ENCODE measurements at regions of chr7 and their contacts with region 1.

Region 1: DNA sequence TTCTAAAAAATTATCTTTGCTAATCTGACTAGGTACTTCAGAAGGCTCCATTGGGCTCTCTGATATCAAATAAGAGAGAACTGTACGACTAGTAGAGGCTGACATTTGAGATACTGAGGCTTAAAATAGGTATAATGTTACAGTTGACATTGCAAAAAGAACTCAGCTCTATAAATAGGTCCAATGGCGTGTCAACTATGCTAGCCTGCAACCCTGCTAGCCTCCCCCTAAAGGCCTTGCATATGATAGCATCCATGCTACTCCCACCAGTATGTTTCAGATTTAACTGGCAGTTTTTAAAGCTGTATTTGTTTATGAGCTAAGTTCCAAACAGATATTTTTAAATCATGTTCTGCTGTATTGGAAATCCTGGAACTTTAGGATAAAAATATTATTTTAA is at the start of gene PPP1R3A:
- DNase-seq: peak in 2 of 5 donors; percentile 40 to 44
- ATAC-seq: peak; percentile 96 to 97 (median 96)
- H3K4me3 ChIP-seq: peak within 1 kb of the TSS; percentile 3 to 62 (median 50)
- H3K27ac ChIP-seq: peak within 1 kb of the TSS; percentile 52 to 89 (median 74)
- H3K4me1 ChIP-seq: peaks cover 0 to 5% (median 0%) of the 10 kb centered on the region in 12 donors
- H3K27me3 ChIP-seq: no peaks in the 10 kb centered on the region
- CTCF ChIP-seq: peak in 10 of 12 donors; percentile 10 to 51 (median 34)
- POLR2A ChIP-seq: no peak
- total RNA-seq, gene PPP1R3A: 53.4 to 156 (median 117) TPM

Region 2: GRCh38 chr7:113774182-113774807 is 144.7 kb before region 1 on chr7:
- intact Hi-C with region 1: loop called in 1 of 10 experiments (anchors 5 kb)
- DNase-seq: peak in 2 of 5 donors; percentile 18 to 27
- ATAC-seq: peak; percentile 64 to 82 (median 73)
- H3K4me3 ChIP-seq: no peak overlapping the region
- H3K27ac ChIP-seq: peak overlapping the region in 2 of 12 donors; percentile 17 to 28
- H3K4me1 ChIP-seq: peaks cover 0 to 6% (median 0%) of the 10 kb centered on the region in 12 donors
- H3K27me3 ChIP-seq: no peaks in the 10 kb centered on the region
- CTCF ChIP-seq: peak; percentile 29 to 66 (median 54)
- POLR2A ChIP-seq: no peak

Region 3: DNA sequence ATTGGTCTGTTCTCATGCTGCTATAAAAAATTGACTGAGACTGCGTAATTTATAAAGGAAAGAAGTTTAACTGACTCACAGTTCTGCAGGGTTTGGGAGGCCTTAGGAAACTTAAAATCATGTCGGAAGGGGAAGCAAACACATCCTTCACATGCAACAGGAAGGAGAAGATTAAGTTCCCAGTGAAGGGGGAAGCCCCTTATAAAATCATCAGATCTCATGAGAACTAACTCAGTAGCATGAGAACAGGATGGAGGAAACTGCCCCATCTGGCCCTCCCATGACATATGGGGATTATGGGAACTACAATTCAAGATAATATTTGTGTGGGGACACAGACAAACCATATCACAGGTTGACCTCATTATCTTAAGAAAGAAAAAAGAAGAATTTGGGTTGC is 134.6 kb before region 1 on chr7:
- intact Hi-C with region 1: loop called in 2 of 10 experiments (anchors 5 to 10 kb)
- DNase-seq: no peak
- ATAC-seq: no peak
- H3K4me3 ChIP-seq: no peak overlapping the region
- H3K27ac ChIP-seq: no peak overlapping the region
- H3K4me1 ChIP-seq: peaks cover 0 to under 1% (median 0%) of the 10 kb centered on the region in 12 donors
- H3K27me3 ChIP-seq: no peaks in the 10 kb centered on the region
- CTCF ChIP-seq: no peak
- POLR2A ChIP-seq: no peak

Region 4: DNA sequence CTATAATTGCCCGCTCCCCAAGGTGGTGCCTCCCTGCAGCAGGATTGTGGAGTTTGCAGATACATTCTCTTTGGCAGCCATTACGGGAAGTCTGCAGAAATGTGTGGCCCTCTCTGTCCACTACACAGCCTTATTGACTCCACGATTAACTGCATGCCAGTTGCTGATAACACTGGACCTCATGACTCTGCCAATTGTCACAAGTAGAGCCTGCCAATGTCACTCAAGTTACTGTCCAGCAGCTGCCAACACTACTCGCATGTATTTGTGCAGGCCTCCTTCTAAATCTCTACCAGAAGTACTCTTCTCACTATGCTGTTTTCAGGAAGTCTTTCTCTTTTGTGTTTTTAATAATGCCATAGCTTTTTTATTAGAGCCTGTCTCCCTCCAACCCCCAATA is 128.9 kb before region 1 on chr7:
- intact Hi-C with region 1: loop called in 6 of 10 experiments (anchors 5 to 10 kb)
- DNase-seq: peak; percentile 42 to 71 (median 52)
- ATAC-seq: peak; percentile 98 to 99 (median 99)
- H3K4me3 ChIP-seq: no peak overlapping the region
- H3K27ac ChIP-seq: peak overlapping the region in 4 of 12 donors; percentile 14 to 62 (median 40)
- H3K4me1 ChIP-seq: peaks cover 0 to 17% (median 0%) of the 10 kb centered on the region in 12 donors
- H3K27me3 ChIP-seq: no peaks in the 10 kb centered on the region
- CTCF ChIP-seq: no peak
- POLR2A ChIP-seq: no peak

Region 5: DNA sequence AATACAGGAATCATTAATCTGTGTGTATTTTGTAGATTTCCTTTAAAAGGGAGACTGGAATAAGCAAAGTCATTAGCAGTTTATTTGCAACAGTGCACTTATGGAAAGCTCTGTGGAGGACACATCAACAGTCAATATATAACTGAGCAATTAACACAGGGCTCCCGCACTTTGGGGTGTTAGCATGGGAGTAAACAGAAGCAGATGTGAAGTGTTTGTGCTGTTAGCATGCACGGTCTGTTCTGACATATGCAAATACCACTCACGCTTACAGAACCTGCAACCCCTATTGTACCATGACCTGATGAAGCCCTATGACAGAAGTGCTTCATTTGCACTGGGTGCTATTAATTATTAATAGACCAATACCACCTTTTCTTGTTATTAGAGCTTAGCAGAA is 119.0 kb before region 1 on chr7:
- intact Hi-C with region 1: loop called in 3 of 10 experiments (anchors 10 kb)
- DNase-seq: no peak
- ATAC-seq: no peak
- H3K4me3 ChIP-seq: no peak overlapping the region
- H3K27ac ChIP-seq: no peak overlapping the region
- H3K4me1 ChIP-seq: no peaks in the 10 kb centered on the region
- H3K27me3 ChIP-seq: no peaks in the 10 kb centered on the region
- CTCF ChIP-seq: no peak
- POLR2A ChIP-seq: no peak

Region 6: DNA sequence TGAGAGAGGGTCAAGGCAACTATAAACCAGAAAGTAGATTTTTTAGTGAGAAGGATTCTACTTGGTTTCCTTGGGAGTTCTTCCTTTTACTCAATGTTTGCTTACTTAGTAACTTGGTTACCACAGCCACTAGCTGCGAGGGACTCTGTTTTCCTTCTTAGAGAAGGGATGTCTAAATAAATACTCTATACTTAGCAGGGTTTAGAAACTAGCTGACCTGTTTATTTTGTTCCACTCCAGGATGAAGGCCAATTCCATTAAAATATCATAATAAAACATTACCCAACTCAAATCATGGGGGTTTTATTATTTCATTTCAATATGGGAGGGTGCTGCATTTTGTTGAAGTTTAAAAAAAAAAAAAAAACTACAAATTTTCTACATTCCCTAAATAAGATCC is 87.4 kb before region 1 on chr7:
- intact Hi-C with region 1: no loop called
- DNase-seq: no peak
- ATAC-seq: peak in 1 of 4 donors; percentile 74
- H3K4me3 ChIP-seq: no peak overlapping the region
- H3K27ac ChIP-seq: peak overlapping the region in 2 of 12 donors; percentile 7 to 17
- H3K4me1 ChIP-seq: peaks cover 0 to 8% (median 0%) of the 10 kb centered on the region in 12 donors
- H3K27me3 ChIP-seq: no peaks in the 10 kb centered on the region
- CTCF ChIP-seq: no peak
- POLR2A ChIP-seq: no peak

Region 7: GRCh38 chr7:113986209-113986608 is 67.3 kb after region 1 on chr7:
- intact Hi-C with region 1: loop called in 1 of 10 experiments (anchors 10 kb)
- DNase-seq: no peak
- ATAC-seq: no peak
- H3K4me3 ChIP-seq: no peak overlapping the region
- H3K27ac ChIP-seq: no peak overlapping the region
- H3K4me1 ChIP-seq: no peaks in the 10 kb centered on the region
- H3K27me3 ChIP-seq: no peaks in the 10 kb centered on the region
- CTCF ChIP-seq: no peak
- POLR2A ChIP-seq: no peak